Mammary epithelial cell (primary cell): ENCODE measurements at regions of chr11 and their contacts with region 1.

Region 1: GRCh38 chr11:131770801-131771200 is 400.4 kb downstream of the NTM start:
- DNase-seq: no peak
- H3K4me3 ChIP-seq: no peak overlapping the region
- H3K27ac ChIP-seq: no peak overlapping the region
- H3K4me1 ChIP-seq: no peaks in the 10 kb centered on the region
- H3K27me3 ChIP-seq: peaks cover 8% of the 10 kb centered on the region
- CTCF ChIP-seq: no peak

Region 2: DNA sequence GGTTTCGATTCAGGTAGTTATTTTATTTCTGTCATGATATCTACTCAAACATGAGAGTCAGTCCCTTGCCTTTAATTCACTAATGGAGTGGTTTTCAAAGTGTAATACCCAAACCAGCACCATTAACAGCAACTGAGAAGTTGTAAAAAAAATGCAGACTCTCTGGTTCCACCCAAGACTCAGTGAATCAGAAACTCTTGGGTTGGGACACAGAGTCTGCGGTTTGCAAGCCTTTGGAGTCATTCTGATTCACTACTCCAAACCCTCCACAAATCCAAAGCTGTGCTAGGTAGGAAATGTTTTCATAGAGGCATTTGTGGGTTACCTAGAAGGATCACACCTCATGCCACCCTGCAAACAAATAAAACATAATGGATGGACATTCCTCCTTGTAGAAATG is 60.3 kb before region 1 on chr11:
- CTCF ChIA-PET with region 1: no interaction called
- dilution Hi-C with region 1: no loop called
- in situ Hi-C with region 1: no loop called
- intact Hi-C with region 1: no loop called
- DNase-seq: peak; percentile 82
- H3K4me3 ChIP-seq: no peak overlapping the region
- H3K27ac ChIP-seq: no peak overlapping the region
- H3K4me1 ChIP-seq: no peaks in the 10 kb centered on the region
- H3K27me3 ChIP-seq: no peaks in the 10 kb centered on the region
- CTCF ChIP-seq: no peak

Region 3: DNA sequence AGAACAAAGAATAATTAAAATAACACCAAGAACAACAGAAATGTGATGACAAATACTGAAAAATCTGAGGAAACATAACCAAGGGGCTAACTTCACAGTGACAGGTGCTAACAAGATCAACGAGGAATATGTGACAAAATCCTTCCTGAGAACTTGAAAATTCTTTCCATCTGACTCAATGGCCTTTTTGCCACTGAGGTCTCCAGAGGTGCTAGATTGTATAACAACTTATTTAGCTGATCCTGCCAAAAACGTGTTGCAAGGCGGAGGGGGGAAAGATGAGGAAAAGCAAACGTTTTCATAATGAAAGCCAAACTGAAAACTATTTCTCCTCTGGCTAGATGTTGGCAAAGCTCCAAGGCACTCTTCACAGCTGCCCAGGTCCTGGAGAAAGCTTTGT is 35.9 kb before region 1 on chr11:
- CTCF ChIA-PET with region 1: no interaction called
- dilution Hi-C with region 1: loop called (anchors 5 kb)
- in situ Hi-C with region 1: no loop called
- intact Hi-C with region 1: no loop called
- DNase-seq: no peak
- H3K4me3 ChIP-seq: no peak overlapping the region
- H3K27ac ChIP-seq: no peak overlapping the region
- H3K4me1 ChIP-seq: no peaks in the 10 kb centered on the region
- H3K27me3 ChIP-seq: no peaks in the 10 kb centered on the region
- CTCF ChIP-seq: no peak

Region 4: DNA sequence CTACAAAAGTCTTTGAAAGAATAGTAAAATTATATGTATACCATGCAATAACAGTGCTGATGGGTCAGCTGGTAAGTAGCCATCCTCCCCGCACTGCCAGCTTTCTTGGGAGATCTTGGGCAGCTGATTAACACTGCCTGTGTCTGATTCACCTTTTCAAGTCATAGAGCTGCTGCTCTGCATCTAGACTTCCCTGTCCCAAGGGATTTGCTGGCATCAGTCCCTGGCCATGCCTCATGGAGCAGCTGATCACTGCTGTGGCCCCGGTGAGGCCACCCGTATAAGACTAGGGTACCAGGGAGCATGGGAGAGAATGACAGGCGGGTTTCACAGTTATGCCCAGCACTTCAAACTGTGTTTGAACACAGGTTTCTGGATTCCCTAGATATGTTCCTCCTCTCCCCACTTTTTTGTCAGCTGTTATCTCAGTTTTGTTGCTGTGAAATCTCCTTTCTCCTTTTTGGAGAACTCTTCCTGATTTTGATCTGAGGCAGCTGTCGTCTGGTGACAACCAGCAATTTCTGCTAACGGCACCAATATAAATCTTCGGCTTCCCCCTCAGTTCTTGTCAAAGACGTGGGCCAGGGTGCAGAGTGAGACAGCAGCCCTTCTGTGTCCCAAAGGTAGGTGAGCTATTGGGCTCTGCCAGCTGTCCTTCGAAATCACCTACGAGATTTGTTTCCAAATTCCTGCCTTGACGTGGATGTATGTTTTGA is 38.6 kb after region 1 on chr11:
- CTCF ChIA-PET with region 1: no interaction called
- dilution Hi-C with region 1: loop called (anchors 5 kb)
- in situ Hi-C with region 1: no loop called
- intact Hi-C with region 1: no loop called
- DNase-seq: peak; percentile 1
- H3K4me3 ChIP-seq: no peak overlapping the region
- H3K27ac ChIP-seq: no peak overlapping the region
- H3K4me1 ChIP-seq: peaks cover 20% of the 10 kb centered on the region
- H3K27me3 ChIP-seq: peaks cover 8% of the 10 kb centered on the region
- CTCF ChIP-seq: no peak